Adrenal gland (tissue), 19 donors: ENCODE measurements at regions of chr17 and their contacts with region 1.

Region 1: GRCh38 chr17:8189711-8190477 is at the start of gene BORCS6:
- DNase-seq: peak; percentile 96 to 99 (median 99)
- H3K4me3 ChIP-seq: peak within 1 kb of the TSS; percentile 62 to 98 (median 86)
- H3K27ac ChIP-seq: peak within 1 kb of the TSS; percentile 91 to 96 (median 95)
- H3K4me1 ChIP-seq: peaks cover 31 to 38% of the 10 kb centered on the region in 2 donors
- H3K27me3 ChIP-seq: no peaks in the 10 kb centered on the region
- CTCF ChIP-seq: peak in 1 of 6 experiments; percentile 18
- POLR2A ChIP-seq: peak; percentile 42 to 89
- total RNA-seq, gene BORCS6: 10.5 to 29.7 (median 14.7) TPM

Region 2: GRCh38 chr17:8041249-8041928 is 148.5 kb before region 1 on chr17:
- intact Hi-C with region 1: no loop called
- DNase-seq: peak in 2 of 7 donors; percentile 46 to 47
- H3K4me3 ChIP-seq: no peak overlapping the region
- H3K27ac ChIP-seq: peak overlapping the region in 2 of 5 donors; percentile 6 to 27
- H3K4me1 ChIP-seq: no peaks in the 10 kb centered on the region
- H3K27me3 ChIP-seq: peaks cover 5% of the 10 kb centered on the region
- CTCF ChIP-seq: peak; percentile 28 to 55 (median 46)
- POLR2A ChIP-seq: no peak

Region 3: GRCh38 chr17:8119581-8120519 is 70.0 kb before region 1 on chr17:
- intact Hi-C with region 1: loop called in 1 of 2 experiments (anchors 10 kb)
- DNase-seq: peak; percentile 73 to 95 (median 85)
- H3K4me3 ChIP-seq: peak overlapping the region in 2 of 4 donors; percentile 17 to 61
- H3K27ac ChIP-seq: peak overlapping the region in 4 of 5 donors; percentile 49 to 91 (median 73)
- H3K4me1 ChIP-seq: peaks cover 38 to 57% of the 10 kb centered on the region in 2 donors
- H3K27me3 ChIP-seq: peaks cover 25% of the 10 kb centered on the region
- CTCF ChIP-seq: no peak
- POLR2A ChIP-seq: no peak

Region 4: DNA sequence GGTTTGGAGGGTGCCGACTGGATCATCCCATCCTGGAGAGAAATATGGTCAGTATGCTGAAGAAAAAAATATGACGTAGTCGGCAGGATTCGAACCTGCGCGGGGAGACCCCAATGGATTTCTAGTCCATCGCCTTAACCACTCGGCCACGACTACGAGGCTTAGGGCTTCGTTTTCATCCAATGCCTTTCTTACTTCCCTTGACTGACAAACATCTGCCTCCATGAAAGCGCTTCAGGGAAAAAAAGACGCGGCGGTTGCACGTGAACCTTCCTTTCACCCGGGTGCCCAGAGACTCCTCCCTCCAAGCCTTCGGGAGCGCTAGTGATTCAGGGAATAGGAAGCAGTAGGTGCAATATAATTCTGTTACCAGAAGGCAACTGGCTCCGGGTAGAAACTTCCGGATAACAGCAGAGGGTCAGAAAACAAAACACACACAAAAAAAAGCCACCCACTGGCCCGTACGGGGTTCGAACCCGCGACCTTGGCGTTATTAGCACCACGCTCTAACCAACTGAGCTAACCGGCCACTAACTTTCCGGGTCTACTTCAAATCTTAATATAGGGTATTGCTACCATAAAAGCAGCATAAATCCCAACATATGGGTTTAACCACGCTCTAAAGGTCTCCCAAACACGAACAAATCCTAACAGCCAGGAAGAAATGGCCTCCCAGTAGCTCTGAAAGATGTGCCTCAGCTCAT is 36.8 kb after region 1 on chr17:
- intact Hi-C with region 1: loop called in 1 of 2 experiments (anchors 5 kb)
- DNase-seq: peak; percentile 81 to 95 (median 85)
- H3K4me3 ChIP-seq: peak overlapping the region in 1 of 4 donors; percentile 38
- H3K27ac ChIP-seq: peak overlapping the region in 4 of 5 donors; percentile 55 to 85 (median 76)
- H3K4me1 ChIP-seq: peaks cover 9 to 13% of the 10 kb centered on the region in 2 donors
- H3K27me3 ChIP-seq: no peaks in the 10 kb centered on the region
- CTCF ChIP-seq: peak in 2 of 6 experiments; percentile 10 to 19
- POLR2A ChIP-seq: peak in 1 of 2 donors; percentile 49

Region 5: DNA sequence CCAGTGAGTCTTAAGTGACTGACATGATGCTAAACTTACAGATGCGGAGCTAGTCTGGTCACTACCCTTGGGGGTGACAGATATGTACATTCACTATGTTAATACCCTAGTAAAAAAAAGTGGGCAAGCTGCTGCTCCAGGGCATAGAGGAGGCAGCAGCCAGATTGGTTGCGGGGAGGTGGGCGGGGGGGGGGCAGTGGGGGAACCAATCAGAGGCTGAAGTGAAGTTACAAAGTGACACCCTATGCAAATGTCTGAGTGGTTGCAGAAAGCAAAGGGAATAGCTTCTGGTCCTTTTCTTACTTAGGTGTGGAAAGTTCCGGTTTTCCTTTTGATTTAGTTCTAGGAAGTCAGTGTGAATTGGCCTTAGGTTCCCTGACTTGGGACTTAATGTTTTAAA is 257.9 kb after region 1 on chr17:
- intact Hi-C with region 1: no loop called
- DNase-seq: no peak
- H3K4me3 ChIP-seq: no peak overlapping the region
- H3K27ac ChIP-seq: no peak overlapping the region
- H3K4me1 ChIP-seq: peaks cover 0 to 14% of the 10 kb centered on the region in 2 donors
- H3K27me3 ChIP-seq: no peaks in the 10 kb centered on the region
- CTCF ChIP-seq: no peak
- POLR2A ChIP-seq: no peak